ENCODE measurements at regions of chr11 and their contacts with region 1.

Region 1: GRCh38 chr11:45110562-45110961 is 35.9 kb upstream of the PRDM11 start:
- DNase-seq: peak; percentile 57
- H3K4me3 ChIP-seq: no peak overlapping the region
- H3K27ac ChIP-seq: no peak overlapping the region
- H3K27me3 ChIP-seq: peaks cover 32% of the 10 kb centered on the region
- CTCF ChIP-seq: peak; percentile 78

Region 2: GRCh38 chr11:44927174-44927661 is 183.3 kb before region 1 on chr11:
- CTCF ChIA-PET with region 1: interaction called, 303 read pairs
- POLR2A ChIA-PET with region 1: interaction called, 7 read pairs
- DNase-seq: peak; percentile 39
- H3K4me3 ChIP-seq: no peak overlapping the region
- H3K27ac ChIP-seq: no peak overlapping the region
- H3K27me3 ChIP-seq: peaks cover 37% of the 10 kb centered on the region
- CTCF ChIP-seq: peak; percentile 86

Region 3: GRCh38 chr11:45071232-45071631 is 39.3 kb before region 1 on chr11:
- CTCF ChIA-PET with region 1: no interaction called
- POLR2A ChIA-PET with region 1: no interaction called
- DNase-seq: no peak
- H3K4me3 ChIP-seq: no peak overlapping the region
- H3K27ac ChIP-seq: no peak overlapping the region
- H3K27me3 ChIP-seq: peaks cover 14% of the 10 kb centered on the region
- CTCF ChIP-seq: no peak

Region 4: DNA sequence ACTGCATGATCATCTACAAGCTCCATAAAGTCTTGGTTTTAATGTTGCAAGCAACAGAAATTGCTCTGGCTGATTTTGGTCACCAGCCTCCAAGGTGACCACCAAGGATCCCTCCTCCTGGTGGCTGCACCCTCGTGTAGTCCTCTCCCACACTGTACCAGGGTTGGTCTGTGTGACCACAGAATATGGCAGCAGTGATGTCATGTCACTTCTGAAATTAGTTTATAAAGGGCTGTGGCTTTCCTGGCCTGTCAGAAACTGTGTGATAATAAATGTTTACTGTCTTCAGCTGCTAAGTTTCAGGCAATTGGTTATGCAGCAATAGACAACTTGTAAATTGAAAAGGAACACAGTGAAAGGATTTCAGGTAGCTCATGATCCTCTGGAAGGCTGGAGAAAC is 30.6 kb after region 1 on chr11:
- CTCF ChIA-PET with region 1: interaction called, 11 read pairs
- POLR2A ChIA-PET with region 1: no interaction called
- DNase-seq: no peak
- H3K4me3 ChIP-seq: no peak overlapping the region
- H3K27ac ChIP-seq: no peak overlapping the region
- H3K27me3 ChIP-seq: peaks cover 29% of the 10 kb centered on the region
- CTCF ChIP-seq: no peak

Region 5: DNA sequence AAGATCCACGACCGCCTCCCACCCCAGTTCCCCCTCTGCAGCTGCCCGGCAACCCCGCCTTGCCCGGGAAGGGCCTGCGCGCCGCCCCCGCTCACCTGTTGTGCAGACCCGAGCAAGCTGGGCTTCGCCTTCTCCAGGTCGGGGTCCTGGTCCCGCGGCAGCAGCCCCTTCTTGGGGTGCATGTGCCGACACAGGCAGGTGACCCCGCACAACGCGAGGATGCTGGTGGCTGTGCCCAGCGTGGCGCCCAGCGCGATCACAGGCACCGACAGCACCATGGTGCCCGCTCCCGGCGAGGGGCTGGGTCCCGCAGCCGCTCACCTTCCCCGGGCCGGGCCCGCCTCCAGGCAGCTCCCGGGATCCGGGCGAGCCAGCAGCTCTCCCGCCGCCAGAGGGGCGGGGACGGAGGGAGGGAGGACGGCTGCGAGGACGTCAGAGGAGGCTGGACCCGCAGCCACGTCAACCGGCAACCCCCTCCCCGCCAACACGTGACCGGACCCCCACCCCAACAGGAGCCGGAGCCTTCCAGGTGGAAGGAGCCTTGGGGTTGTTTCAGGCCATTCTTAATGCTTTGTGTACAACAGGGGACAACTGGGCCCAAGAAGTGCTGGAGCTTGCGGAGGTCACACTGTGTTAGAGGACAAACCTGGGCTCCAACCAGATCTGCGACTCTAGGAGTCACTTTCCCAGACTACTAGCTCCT is 175.5 kb after region 1 on chr11 and contains the start of gene SYT13:
- CTCF ChIA-PET with region 1: interaction called, 113 read pairs
- POLR2A ChIA-PET with region 1: no interaction called
- DNase-seq: no peak
- H3K4me3 ChIP-seq: no peak within 1 kb of the TSS
- H3K27ac ChIP-seq: no peak within 1 kb of the TSS
- H3K27me3 ChIP-seq: peaks cover 58% of the 10 kb centered on the region
- CTCF ChIP-seq: no peak
- polyA plus RNA-seq, gene SYT13: not detected in 2 replicates

Region 6: GRCh38 chr11:45304111-45304991 is 193.8 kb after region 1 on chr11:
- CTCF ChIA-PET with region 1: interaction called, 11 read pairs
- POLR2A ChIA-PET with region 1: no interaction called
- DNase-seq: no peak
- H3K4me3 ChIP-seq: no peak overlapping the region
- H3K27ac ChIP-seq: no peak overlapping the region
- H3K27me3 ChIP-seq: peaks cover 10% of the 10 kb centered on the region
- CTCF ChIP-seq: no peak

Region 7: GRCh38 chr11:45771566-45772448 is 661.2 kb after region 1 on chr11:
- CTCF ChIA-PET with region 1: interaction called, 11 read pairs
- POLR2A ChIA-PET with region 1: no interaction called
- DNase-seq: peak; percentile 23
- H3K4me3 ChIP-seq: peak overlapping the region; percentile 63
- H3K27ac ChIP-seq: no peak overlapping the region
- H3K27me3 ChIP-seq: peaks cover 8% of the 10 kb centered on the region
- CTCF ChIP-seq: peak; percentile 94

Measured in AG04450 (cell line).